ENCODE measurements at regions of chr3 and their contacts with region 1.

Region 1: GRCh38 chr3:30606301-30607031 is at the start of gene TGFBR2:
- DNase-seq: peak; percentile 98
- H3K4me3 Mint-ChIP-seq: peak within 1 kb of the TSS; percentile 86
- H3K27ac Mint-ChIP-seq: peak within 1 kb of the TSS; percentile 93
- H3K4me1 Mint-ChIP-seq: peaks cover 35% of the 10 kb centered on the region
- H3K27me3 Mint-ChIP-seq: no peaks in the 10 kb centered on the region
- CTCF ChIP-seq: peak; percentile 21
- total RNA-seq, gene TGFBR2: 103 and 104 TPM in 2 replicates

Region 2: DNA sequence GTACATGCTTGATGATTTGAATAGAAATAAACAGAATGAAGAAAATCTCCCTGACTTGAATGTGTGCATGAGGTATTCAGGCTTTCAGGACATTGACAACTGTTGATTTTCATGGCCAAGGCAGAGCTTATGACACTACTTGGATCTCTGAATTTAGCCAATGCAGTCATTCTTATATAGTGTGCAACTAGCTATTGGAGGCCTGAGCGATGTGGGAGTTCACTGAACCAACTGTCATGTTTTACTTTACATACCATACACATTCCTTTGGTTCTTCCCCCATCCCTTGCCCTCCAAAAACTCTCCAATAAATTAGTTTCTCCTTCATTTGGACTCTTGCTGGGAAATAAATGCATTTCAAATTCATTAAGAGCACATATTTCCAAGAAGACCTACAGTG is 865.2 kb before region 1 on chr3:
- CTCF ChIA-PET with region 1: no interaction called
- POLR2A ChIA-PET with region 1: no interaction called
- intact Hi-C with region 1: no loop called
- DNase-seq: no peak
- H3K4me3 Mint-ChIP-seq: no peak overlapping the region
- H3K27ac Mint-ChIP-seq: no peak overlapping the region
- H3K4me1 Mint-ChIP-seq: peaks cover 3% of the 10 kb centered on the region
- H3K27me3 Mint-ChIP-seq: no peaks in the 10 kb centered on the region
- CTCF ChIP-seq: no peak

Region 3: DNA sequence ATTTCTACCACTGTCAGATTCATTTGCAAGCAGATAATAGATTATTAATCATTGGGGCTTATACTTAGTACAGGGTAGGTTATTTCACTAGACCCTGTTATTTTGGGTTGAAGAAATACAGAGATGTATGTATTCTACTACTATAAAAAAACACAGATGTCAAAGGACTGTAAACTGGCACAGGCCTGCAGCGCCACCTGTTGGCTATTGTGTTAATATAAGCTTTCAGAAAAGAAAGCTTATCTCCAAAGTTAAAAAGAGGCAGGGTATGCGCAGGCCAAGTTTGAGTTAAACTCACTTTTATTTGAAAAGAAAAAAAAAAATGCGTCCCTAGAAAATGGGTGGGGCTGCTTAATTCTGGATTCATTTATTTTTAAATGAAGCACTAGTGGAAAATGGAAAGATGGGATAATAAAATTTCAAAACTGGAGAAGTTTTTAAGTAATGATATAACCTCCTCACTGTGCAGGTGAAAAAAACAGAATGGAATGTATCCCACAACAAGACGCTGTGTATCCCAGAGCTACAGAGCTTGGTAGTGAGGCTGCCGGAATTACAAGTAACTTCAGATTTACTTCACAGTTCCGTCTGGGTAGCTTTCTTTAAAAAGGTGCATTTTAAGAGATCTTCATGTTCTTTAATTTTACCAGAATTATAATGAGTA is 407.2 kb before region 1 on chr3:
- CTCF ChIA-PET with region 1: interaction called, 7 read pairs
- POLR2A ChIA-PET with region 1: interaction called, 3 read pairs
- intact Hi-C with region 1: loop called (anchors 1 kb)
- DNase-seq: peak; percentile 76
- H3K4me3 Mint-ChIP-seq: no peak overlapping the region
- H3K27ac Mint-ChIP-seq: peak overlapping the region; percentile 12
- H3K4me1 Mint-ChIP-seq: peaks cover 32% of the 10 kb centered on the region
- H3K27me3 Mint-ChIP-seq: no peaks in the 10 kb centered on the region
- CTCF ChIP-seq: peak; percentile 60

Region 4: DNA sequence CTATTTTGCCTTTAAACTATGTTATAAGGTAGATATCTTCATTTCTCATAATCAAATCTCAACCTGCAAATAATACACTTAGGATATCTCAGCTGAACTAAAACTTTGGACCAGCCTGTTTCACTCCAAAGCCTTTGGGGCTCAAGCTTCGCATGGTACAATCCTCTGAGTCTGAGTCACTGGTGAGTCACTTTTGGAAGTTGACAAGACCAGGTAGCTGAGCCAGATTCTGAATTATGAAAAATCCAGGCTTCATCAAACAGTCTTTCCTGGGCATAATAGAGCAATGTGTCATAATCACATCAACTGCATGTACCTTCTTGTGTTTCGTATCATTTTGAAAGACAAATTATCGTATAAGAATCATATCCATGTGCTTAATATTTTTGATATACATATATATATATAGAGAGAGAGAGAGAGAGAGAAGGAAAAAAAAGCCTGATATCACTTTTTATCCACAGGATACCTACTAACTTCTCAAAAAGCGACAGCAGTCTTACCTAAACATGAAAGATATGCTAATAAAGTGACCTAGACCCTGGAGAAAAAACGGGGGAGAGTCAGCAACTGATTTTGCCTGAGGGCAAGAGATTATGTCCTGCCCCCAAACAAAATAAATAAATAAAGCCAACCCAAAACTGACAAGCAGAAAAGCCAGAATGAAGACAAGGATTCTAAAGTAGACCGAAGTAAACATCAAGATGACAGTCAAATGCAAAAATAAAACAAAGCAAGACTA is 264.0 kb before region 1 on chr3:
- CTCF ChIA-PET with region 1: interaction called, 5 read pairs
- POLR2A ChIA-PET with region 1: interaction called, 29 read pairs
- intact Hi-C with region 1: loop called (anchors 5 kb)
- DNase-seq: peak; percentile 97
- H3K4me3 Mint-ChIP-seq: peak overlapping the region; percentile 38
- H3K27ac Mint-ChIP-seq: peak overlapping the region; percentile 94
- H3K4me1 Mint-ChIP-seq: peaks cover 39% of the 10 kb centered on the region
- H3K27me3 Mint-ChIP-seq: no peaks in the 10 kb centered on the region
- CTCF ChIP-seq: no peak

Region 5: DNA sequence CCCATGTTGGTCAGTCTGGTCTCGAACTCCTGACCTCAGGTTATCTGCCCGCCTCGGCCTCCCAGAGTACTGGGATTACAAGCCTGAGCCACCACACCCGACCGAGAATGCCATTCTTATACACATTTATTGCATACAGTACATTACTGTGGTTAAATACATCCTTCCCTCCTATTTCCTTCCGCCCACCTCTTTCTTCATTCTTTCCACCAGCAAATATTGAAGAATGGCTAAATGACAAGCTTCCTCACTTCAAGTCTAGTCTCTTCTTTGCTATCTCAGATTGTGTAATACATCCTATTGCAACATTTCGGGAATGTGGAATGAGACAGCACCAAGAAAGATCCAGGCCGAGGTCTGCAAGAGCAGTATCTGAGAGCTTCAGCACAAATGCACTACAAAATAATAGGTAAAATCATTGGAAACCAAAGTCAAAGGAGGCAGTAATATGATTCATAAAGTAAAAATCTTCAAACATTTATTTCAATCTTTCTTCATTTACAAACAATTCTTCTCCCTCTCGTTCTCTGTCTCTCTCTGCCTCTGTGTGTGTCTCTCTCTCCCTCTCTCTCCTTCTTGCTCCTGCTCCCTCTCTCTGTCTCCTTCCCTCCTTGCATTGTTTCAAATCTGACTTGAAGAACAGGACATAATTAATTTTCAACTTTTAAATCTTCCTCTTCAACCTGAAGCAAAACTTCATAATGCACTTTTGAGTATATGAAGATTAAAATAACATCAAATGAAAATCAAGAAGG is 94.8 kb before region 1 on chr3:
- CTCF ChIA-PET with region 1: no interaction called
- POLR2A ChIA-PET with region 1: interaction called, 123 read pairs
- intact Hi-C with region 1: loop called (anchors 2 kb)
- DNase-seq: peak; percentile 97
- H3K4me3 Mint-ChIP-seq: no peak overlapping the region
- H3K27ac Mint-ChIP-seq: peak overlapping the region; percentile 72
- H3K4me1 Mint-ChIP-seq: peaks cover 37% of the 10 kb centered on the region
- H3K27me3 Mint-ChIP-seq: no peaks in the 10 kb centered on the region
- CTCF ChIP-seq: no peak

Region 6: GRCh38 chr3:30578479-30578878 is 28.0 kb before region 1 on chr3:
- CTCF ChIA-PET with region 1: no interaction called
- POLR2A ChIA-PET with region 1: interaction called, 12 read pairs
- intact Hi-C with region 1: no loop called
- DNase-seq: peak; percentile 89
- H3K4me3 Mint-ChIP-seq: no peak overlapping the region
- H3K27ac Mint-ChIP-seq: peak overlapping the region; percentile 70
- H3K4me1 Mint-ChIP-seq: peaks cover 20% of the 10 kb centered on the region
- H3K27me3 Mint-ChIP-seq: no peaks in the 10 kb centered on the region
- CTCF ChIP-seq: no peak

Region 7: DNA sequence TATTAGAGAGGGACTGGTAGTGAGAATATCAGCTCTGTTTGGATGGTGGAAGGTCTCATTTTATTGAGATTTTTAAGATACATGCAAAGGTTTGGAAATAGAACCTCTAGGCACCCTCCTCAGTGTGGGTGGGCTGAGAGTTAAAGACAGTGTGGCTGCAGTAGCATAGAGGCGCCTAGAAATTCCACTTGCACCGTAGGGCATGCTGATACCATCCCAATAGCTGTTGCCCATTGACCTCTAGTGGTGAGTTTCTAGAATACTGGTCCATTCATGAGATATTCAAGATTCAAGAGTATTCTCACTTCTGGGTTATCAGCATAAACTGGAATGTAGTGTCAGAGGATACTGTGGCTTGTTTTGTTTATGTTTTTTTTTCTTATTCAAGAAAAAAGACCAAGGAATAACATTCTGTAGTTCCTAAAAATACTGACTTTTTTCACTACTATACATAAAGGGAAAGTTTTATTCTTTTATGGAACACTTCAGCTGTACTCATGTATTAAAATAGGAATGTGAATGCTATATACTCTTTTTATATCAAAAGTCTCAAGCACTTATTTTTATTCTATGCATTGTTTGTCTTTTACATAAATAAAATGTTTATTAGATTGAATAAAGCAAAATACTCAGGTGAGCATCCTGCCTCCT is 87.1 kb after region 1 on chr3:
- CTCF ChIA-PET with region 1: interaction called, 5 read pairs
- POLR2A ChIA-PET with region 1: interaction called, 16 read pairs
- intact Hi-C with region 1: loop called (anchors 2 kb)
- DNase-seq: peak; percentile 75
- H3K4me3 Mint-ChIP-seq: no peak overlapping the region
- H3K27ac Mint-ChIP-seq: no peak overlapping the region
- H3K4me1 Mint-ChIP-seq: peaks cover 23% of the 10 kb centered on the region
- H3K27me3 Mint-ChIP-seq: no peaks in the 10 kb centered on the region
- CTCF ChIP-seq: peak; percentile 71